B cell (primary cell): ENCODE measurements at regions of chr6 and their contacts with region 1.

Region 1: GRCh38 chr6:38350942-38351341 is 288.8 kb downstream of the BTBD9 start:
- DNase-seq: no peak
- ATAC-seq: no peak
- H3K4me3 ChIP-seq: no peak overlapping the region
- H3K4me3 Mint-ChIP-seq: no peak overlapping the region
- H3K27ac ChIP-seq: no peak overlapping the region
- H3K27ac Mint-ChIP-seq: no peak overlapping the region
- H3K4me1 ChIP-seq: peaks cover 6 to 14% of the 10 kb centered on the region in 2 donors
- H3K4me1 Mint-ChIP-seq: peaks cover 30% of the 10 kb centered on the region
- H3K27me3 ChIP-seq: no peaks in the 10 kb centered on the region
- H3K27me3 Mint-ChIP-seq: no peaks in the 10 kb centered on the region
- CTCF ChIP-seq: no peak

Region 2: DNA sequence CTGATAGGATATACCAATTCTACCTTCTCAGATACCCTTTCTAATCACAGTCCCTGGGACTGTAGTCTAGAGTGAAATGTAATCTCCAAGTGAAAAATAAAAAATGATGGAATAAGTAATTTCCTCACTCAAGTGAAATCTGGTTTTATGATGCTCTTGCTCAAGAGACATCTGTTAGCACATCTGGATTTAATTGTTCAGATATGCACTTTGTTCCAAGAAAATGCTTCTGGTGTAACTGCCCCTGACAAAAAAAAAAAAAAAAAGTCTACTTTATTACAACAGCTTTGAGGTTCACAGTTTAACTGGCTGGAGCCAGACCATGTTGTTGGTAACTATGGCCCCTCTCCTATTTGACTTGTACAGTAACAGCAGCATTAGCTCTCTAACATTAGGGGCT is 37.0 kb after region 1 on chr6:
- CTCF ChIA-PET with region 1: no interaction called
- POLR2A ChIA-PET with region 1: no interaction called
- intact Hi-C with region 1: loop called (anchors 2 kb)
- DNase-seq: no peak
- ATAC-seq: no peak
- H3K4me3 ChIP-seq: no peak overlapping the region
- H3K4me3 Mint-ChIP-seq: no peak overlapping the region
- H3K27ac ChIP-seq: no peak overlapping the region
- H3K27ac Mint-ChIP-seq: no peak overlapping the region
- H3K4me1 ChIP-seq: no peaks in the 10 kb centered on the region
- H3K4me1 Mint-ChIP-seq: peaks cover 5% of the 10 kb centered on the region
- H3K27me3 ChIP-seq: no peaks in the 10 kb centered on the region
- H3K27me3 Mint-ChIP-seq: no peaks in the 10 kb centered on the region
- CTCF ChIP-seq: no peak